Heart right ventricle (tissue), 16 donors: ENCODE measurements at regions of chr1 and their contacts with region 1.

Region 1: GRCh38 chr1:201946224-201946908 is at the start of gene LMOD1:
- DNase-seq: peak; percentile 81 to 85
- ATAC-seq: peak; percentile 90 to 96 (median 94)
- H3K4me3 ChIP-seq: peak within 1 kb of the TSS; percentile 18 to 70 (median 52)
- H3K27ac ChIP-seq: peak within 1 kb of the TSS; percentile 17 to 78 (median 68)
- H3K4me1 ChIP-seq: peaks cover 0 to 41% (median 6%) of the 10 kb centered on the region in 9 donors
- H3K27me3 ChIP-seq: peaks cover 0 to 42% (median 4%) of the 10 kb centered on the region in 7 donors
- CTCF ChIP-seq: no peak
- total RNA-seq, gene LMOD1: 3.6 to 15.2 (median 9.6) TPM

Region 2: GRCh38 chr1:201904579-201904978 is 41.8 kb before region 1 on chr1:
- intact Hi-C with region 1: loop called in 3 of 10 experiments (anchors 2 to 10 kb)
- DNase-seq: peak in 1 of 2 donors; percentile 55
- ATAC-seq: peak; percentile 56 to 86 (median 74)
- H3K4me3 ChIP-seq: no peak overlapping the region
- H3K27ac ChIP-seq: peak overlapping the region; percentile 18 to 81 (median 70)
- H3K4me1 ChIP-seq: peaks cover 0 to 44% (median 27%) of the 10 kb centered on the region in 9 donors
- H3K27me3 ChIP-seq: no peaks in the 10 kb centered on the region
- CTCF ChIP-seq: no peak

Region 3: DNA sequence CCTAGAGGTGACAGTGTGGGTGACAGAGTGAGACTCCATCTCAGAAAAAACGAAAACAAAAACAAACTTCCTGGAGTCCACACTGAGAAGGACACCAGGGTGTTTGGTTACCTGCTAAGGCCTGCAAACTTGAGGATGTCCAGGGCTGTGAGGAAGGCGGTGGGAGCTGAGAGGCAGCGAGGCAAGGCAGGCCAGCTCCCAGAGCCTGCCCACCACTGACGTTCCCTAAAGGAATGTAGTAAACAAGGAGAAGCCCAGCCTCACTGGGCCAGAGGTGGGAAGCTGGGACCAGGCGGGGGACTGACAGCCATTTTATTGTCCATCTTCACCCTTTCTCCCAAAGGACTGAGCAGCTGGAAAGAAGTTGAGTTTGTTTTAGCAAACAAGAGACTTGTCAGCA is 33.5 kb before region 1 on chr1:
- intact Hi-C with region 1: loop called in 3 of 10 experiments (anchors 5 kb)
- DNase-seq: no peak
- ATAC-seq: peak in 1 of 8 donors; percentile 36
- H3K4me3 ChIP-seq: no peak overlapping the region
- H3K27ac ChIP-seq: peak overlapping the region in 3 of 10 donors; percentile 13 to 39 (median 31)
- H3K4me1 ChIP-seq: peaks cover 3 to 24% (median 18%) of the 10 kb centered on the region in 9 donors
- H3K27me3 ChIP-seq: no peaks in the 10 kb centered on the region
- CTCF ChIP-seq: no peak

Region 4: DNA sequence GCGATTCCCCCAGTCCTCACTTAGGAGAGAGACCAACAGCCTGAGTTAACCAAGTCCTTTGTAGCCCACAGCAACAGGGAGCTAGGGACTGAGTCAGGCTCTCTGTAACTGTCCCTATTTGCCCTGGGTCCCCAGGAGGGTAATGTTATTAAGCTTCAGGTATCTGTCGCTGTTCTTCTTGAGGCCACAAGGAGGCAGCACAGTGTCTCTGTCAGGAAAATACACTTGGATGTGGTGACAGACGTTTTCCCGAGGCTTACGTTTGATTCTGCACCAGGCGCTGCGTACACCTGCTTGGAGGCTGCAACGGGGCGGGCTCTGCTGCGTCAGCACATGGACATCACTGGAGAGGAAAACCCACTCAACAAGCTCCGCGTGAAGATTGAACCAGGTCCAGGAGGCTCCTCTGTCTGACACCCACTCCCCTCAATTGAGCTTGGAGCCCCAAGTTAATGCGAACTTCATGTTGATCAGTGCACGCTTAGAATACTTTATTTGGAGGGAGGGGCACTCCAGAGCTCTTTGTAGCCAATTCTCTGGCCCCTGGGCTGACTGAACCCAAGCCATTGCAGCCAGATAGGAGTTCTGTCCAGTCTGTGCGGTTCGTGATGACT is 53.4 kb after region 1 on chr1:
- intact Hi-C with region 1: no loop called
- DNase-seq: peak in 1 of 2 donors; percentile 27
- ATAC-seq: peak; percentile 36 to 62 (median 48)
- H3K4me3 ChIP-seq: no peak overlapping the region
- H3K27ac ChIP-seq: no peak overlapping the region
- H3K4me1 ChIP-seq: peaks cover 0 to 8% (median 0%) of the 10 kb centered on the region in 9 donors
- H3K27me3 ChIP-seq: no peaks in the 10 kb centered on the region
- CTCF ChIP-seq: peak; percentile 38 to 78 (median 69)